ENCODE measurements at regions of chr10 and their contacts with region 1.

Region 1: DNA sequence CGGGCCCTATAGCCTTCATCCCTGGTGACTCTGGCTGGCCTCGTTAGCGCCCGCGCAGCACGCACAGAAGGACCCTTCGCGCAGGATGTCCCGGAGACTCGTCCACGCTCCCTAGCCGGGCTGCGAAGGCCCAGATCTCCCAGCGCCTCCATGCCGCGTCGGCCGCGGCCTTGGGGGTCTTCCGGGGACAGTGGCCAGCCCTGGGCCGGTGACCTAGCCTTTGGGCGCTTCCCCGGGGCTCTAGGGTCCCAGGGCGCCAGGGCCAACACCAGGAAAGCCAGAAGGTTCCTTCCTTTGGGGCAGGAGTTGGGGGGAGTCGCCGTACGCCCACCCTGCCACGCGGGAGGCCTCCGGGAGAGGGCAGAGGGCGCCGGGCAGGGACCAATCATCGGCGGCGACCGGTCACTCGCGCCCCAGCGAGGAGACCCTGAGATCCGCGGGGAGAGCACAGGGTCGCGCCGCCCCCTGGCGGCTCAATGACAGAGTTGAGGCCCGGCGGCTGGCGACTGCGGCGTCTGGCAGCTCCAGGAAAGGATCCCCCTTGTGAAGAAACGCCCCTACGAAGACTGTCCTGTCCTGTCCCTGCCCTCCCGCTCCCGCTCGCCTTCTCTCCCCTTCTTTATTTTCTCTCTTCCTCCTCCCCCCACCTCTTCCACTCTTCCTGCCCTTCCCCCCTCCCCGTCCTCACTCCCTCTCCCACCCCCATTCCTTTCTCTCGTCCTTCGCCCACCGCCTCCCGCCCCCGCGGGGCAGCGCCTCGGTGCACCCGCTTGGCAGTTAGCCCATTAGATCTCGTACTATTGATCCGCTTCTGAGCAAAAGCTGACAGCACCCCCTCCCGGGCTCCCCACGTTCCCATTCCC is 62.3 kb upstream of the LBX1 start:
- DNase-seq: peak; percentile 78
- ATAC-seq: peak; percentile 85

Region 2: GRCh38 chr10:101569838-101570766 is 278.5 kb after region 1 on chr10:
- intact Hi-C with region 1: loop called (anchors 10 kb)
- DNase-seq: peak; percentile 89
- ATAC-seq: peak; percentile 97

Measured in Right ventricle myocardium superior (tissue), 1 donor.